PC-9 (cell line): ENCODE measurements at regions of chr11 and their contacts with region 1.

Region 1: GRCh38 chr11:94417386-94417987 is 16.3 kb upstream of the GPR83 start:
- DNase-seq: no peak
- H3K4me3 ChIP-seq: no peak overlapping the region
- H3K27ac ChIP-seq: no peak overlapping the region
- H3K4me1 ChIP-seq: no peaks in the 10 kb centered on the region
- H3K27me3 ChIP-seq: no peaks in the 10 kb centered on the region
- CTCF ChIP-seq: peak; percentile 73

Region 2: GRCh38 chr11:93895106-93895862 is 522.2 kb before region 1 on chr11:
- CTCF ChIA-PET with region 1: interaction called, 3 read pairs
- POLR2A ChIA-PET with region 1: no interaction called
- intact Hi-C with region 1: loop called (anchors 1 kb)
- DNase-seq: peak; percentile 18 to 69
- H3K4me3 ChIP-seq: no peak overlapping the region
- H3K27ac ChIP-seq: no peak overlapping the region
- H3K4me1 ChIP-seq: no peaks in the 10 kb centered on the region
- H3K27me3 ChIP-seq: no peaks in the 10 kb centered on the region
- CTCF ChIP-seq: peak; percentile 94

Region 3: GRCh38 chr11:93921695-93922468 is 495.6 kb before region 1 on chr11:
- CTCF ChIA-PET with region 1: no interaction called
- POLR2A ChIA-PET with region 1: no interaction called
- intact Hi-C with region 1: loop called (anchors 1 kb)
- DNase-seq: peak; percentile 32 to 63
- H3K4me3 ChIP-seq: no peak overlapping the region
- H3K27ac ChIP-seq: no peak overlapping the region
- H3K4me1 ChIP-seq: no peaks in the 10 kb centered on the region
- H3K27me3 ChIP-seq: no peaks in the 10 kb centered on the region
- CTCF ChIP-seq: peak; percentile 94

Region 4: GRCh38 chr11:93952082-93952780 is 465.3 kb before region 1 on chr11:
- CTCF ChIA-PET with region 1: no interaction called
- POLR2A ChIA-PET with region 1: no interaction called
- intact Hi-C with region 1: no loop called
- DNase-seq: no peak
- H3K4me3 ChIP-seq: no peak overlapping the region
- H3K27ac ChIP-seq: no peak overlapping the region
- H3K4me1 ChIP-seq: peaks cover 14% of the 10 kb centered on the region
- H3K27me3 ChIP-seq: no peaks in the 10 kb centered on the region
- CTCF ChIP-seq: no peak

Region 5: DNA sequence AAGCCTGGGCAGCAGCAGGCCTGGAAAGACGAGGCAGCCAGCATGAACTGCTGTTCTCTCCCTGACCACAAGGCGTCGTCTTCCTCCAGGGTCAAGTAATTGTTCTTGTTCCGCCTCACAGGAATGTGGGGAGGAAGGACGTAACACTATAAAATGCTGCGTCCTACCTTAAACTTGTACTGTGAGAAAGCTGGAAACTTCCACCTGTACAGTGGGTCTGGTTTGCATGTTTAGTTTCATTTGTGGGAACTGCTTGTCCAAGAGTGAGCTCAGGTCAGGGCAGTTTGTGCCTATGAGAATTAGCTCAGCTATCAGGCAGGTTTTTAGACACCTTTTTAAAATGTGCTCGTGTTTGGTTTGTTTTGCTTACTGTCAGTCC is 233.6 kb before region 1 on chr11:
- CTCF ChIA-PET with region 1: no interaction called
- POLR2A ChIA-PET with region 1: no interaction called
- intact Hi-C with region 1: loop called (anchors 5 kb)
- DNase-seq: peak; percentile 42 to 58
- H3K4me3 ChIP-seq: no peak overlapping the region
- H3K27ac ChIP-seq: no peak overlapping the region
- H3K4me1 ChIP-seq: no peaks in the 10 kb centered on the region
- H3K27me3 ChIP-seq: no peaks in the 10 kb centered on the region
- CTCF ChIP-seq: peak; percentile 92

Region 6: GRCh38 chr11:94477589-94477988 is 60.1 kb after region 1 on chr11:
- CTCF ChIA-PET with region 1: no interaction called
- POLR2A ChIA-PET with region 1: no interaction called
- intact Hi-C with region 1: no loop called
- DNase-seq: no peak
- H3K4me3 ChIP-seq: no peak overlapping the region
- H3K27ac ChIP-seq: no peak overlapping the region
- H3K4me1 ChIP-seq: no peaks in the 10 kb centered on the region
- H3K27me3 ChIP-seq: no peaks in the 10 kb centered on the region
- CTCF ChIP-seq: no peak

Region 7: GRCh38 chr11:94786264-94787126 is 369.0 kb after region 1 on chr11:
- CTCF ChIA-PET with region 1: no interaction called
- POLR2A ChIA-PET with region 1: no interaction called
- intact Hi-C with region 1: no loop called
- DNase-seq: no peak
- H3K4me3 ChIP-seq: no peak overlapping the region
- H3K27ac ChIP-seq: no peak overlapping the region
- H3K4me1 ChIP-seq: peaks cover 64% of the 10 kb centered on the region
- H3K27me3 ChIP-seq: no peaks in the 10 kb centered on the region
- CTCF ChIP-seq: peak; percentile 78

Region 8: GRCh38 chr11:95688580-95689189 is 1271.2 kb after region 1 on chr11:
- CTCF ChIA-PET with region 1: no interaction called
- POLR2A ChIA-PET with region 1: no interaction called
- intact Hi-C with region 1: no loop called
- DNase-seq: no peak
- H3K4me3 ChIP-seq: no peak overlapping the region
- H3K27ac ChIP-seq: no peak overlapping the region
- H3K4me1 ChIP-seq: no peaks in the 10 kb centered on the region
- H3K27me3 ChIP-seq: no peaks in the 10 kb centered on the region
- CTCF ChIP-seq: no peak